B cell (primary cell): ENCODE measurements at regions of chr1 and their contacts with region 1.

Region 1: GRCh38 chr1:15820478-15820877 is 13.0 kb upstream of the UQCRHL start:
- DNase-seq: no peak
- ATAC-seq: no peak
- H3K4me3 ChIP-seq: no peak overlapping the region
- H3K4me3 Mint-ChIP-seq: no peak overlapping the region
- H3K27ac ChIP-seq: no peak overlapping the region
- H3K27ac Mint-ChIP-seq: no peak overlapping the region
- H3K4me1 ChIP-seq: peaks cover 4 to 10% of the 10 kb centered on the region in 2 donors
- H3K4me1 Mint-ChIP-seq: peaks cover 9% of the 10 kb centered on the region
- H3K27me3 ChIP-seq: no peaks in the 10 kb centered on the region
- H3K27me3 Mint-ChIP-seq: no peaks in the 10 kb centered on the region
- CTCF ChIP-seq: no peak

Region 2: GRCh38 chr1:15803354-15803753 is 17.1 kb before region 1 on chr1:
- CTCF ChIA-PET with region 1: interaction called, 20 read pairs
- POLR2A ChIA-PET with region 1: no interaction called
- intact Hi-C with region 1: no loop called
- DNase-seq: peak; percentile 68
- ATAC-seq: peak; percentile 53
- H3K4me3 ChIP-seq: no peak overlapping the region
- H3K4me3 Mint-ChIP-seq: no peak overlapping the region
- H3K27ac ChIP-seq: no peak overlapping the region
- H3K27ac Mint-ChIP-seq: no peak overlapping the region
- H3K4me1 ChIP-seq: no peaks in the 10 kb centered on the region
- H3K4me1 Mint-ChIP-seq: no peaks in the 10 kb centered on the region
- H3K27me3 ChIP-seq: peaks cover 0 to 2% (median 0%) of the 10 kb centered on the region in 4 experiments
- H3K27me3 Mint-ChIP-seq: peaks cover 7% of the 10 kb centered on the region
- CTCF ChIP-seq: peak; percentile 67

Region 3: GRCh38 chr1:15847100-15847892 is 26.8 kb after region 1 on chr1 and contains the start of gene SPEN:
- CTCF ChIA-PET with region 1: interaction called, 52 read pairs
- POLR2A ChIA-PET with region 1: interaction called, 6 read pairs
- intact Hi-C with region 1: loop called (anchors 2 kb)
- DNase-seq: peak; percentile 99
- ATAC-seq: peak; percentile 80
- H3K4me3 ChIP-seq: peak within 1 kb of the TSS; percentile 82 to 99 (median 94)
- H3K4me3 Mint-ChIP-seq: peak within 1 kb of the TSS; percentile 97
- H3K27ac ChIP-seq: peak within 1 kb of the TSS; percentile 87 to 98
- H3K27ac Mint-ChIP-seq: peak within 1 kb of the TSS; percentile 99
- H3K4me1 ChIP-seq: peaks cover 51 to 72% of the 10 kb centered on the region in 2 donors
- H3K4me1 Mint-ChIP-seq: peaks cover 53% of the 10 kb centered on the region
- H3K27me3 ChIP-seq: no peaks in the 10 kb centered on the region
- H3K27me3 Mint-ChIP-seq: no peaks in the 10 kb centered on the region
- CTCF ChIP-seq: no peak
- total RNA-seq, gene SPEN: 126 and 140 TPM in 2 replicates

Region 4: GRCh38 chr1:15902882-15903281 is 82.4 kb after region 1 on chr1:
- CTCF ChIA-PET with region 1: interaction called, 24 read pairs
- POLR2A ChIA-PET with region 1: interaction called, 6 read pairs
- intact Hi-C with region 1: no loop called
- DNase-seq: no peak
- ATAC-seq: no peak
- H3K4me3 ChIP-seq: no peak overlapping the region
- H3K4me3 Mint-ChIP-seq: no peak overlapping the region
- H3K27ac ChIP-seq: no peak overlapping the region
- H3K27ac Mint-ChIP-seq: no peak overlapping the region
- H3K4me1 ChIP-seq: no peaks in the 10 kb centered on the region
- H3K4me1 Mint-ChIP-seq: peaks cover 27% of the 10 kb centered on the region
- H3K27me3 ChIP-seq: no peaks in the 10 kb centered on the region
- H3K27me3 Mint-ChIP-seq: no peaks in the 10 kb centered on the region
- CTCF ChIP-seq: no peak

Region 5: DNA sequence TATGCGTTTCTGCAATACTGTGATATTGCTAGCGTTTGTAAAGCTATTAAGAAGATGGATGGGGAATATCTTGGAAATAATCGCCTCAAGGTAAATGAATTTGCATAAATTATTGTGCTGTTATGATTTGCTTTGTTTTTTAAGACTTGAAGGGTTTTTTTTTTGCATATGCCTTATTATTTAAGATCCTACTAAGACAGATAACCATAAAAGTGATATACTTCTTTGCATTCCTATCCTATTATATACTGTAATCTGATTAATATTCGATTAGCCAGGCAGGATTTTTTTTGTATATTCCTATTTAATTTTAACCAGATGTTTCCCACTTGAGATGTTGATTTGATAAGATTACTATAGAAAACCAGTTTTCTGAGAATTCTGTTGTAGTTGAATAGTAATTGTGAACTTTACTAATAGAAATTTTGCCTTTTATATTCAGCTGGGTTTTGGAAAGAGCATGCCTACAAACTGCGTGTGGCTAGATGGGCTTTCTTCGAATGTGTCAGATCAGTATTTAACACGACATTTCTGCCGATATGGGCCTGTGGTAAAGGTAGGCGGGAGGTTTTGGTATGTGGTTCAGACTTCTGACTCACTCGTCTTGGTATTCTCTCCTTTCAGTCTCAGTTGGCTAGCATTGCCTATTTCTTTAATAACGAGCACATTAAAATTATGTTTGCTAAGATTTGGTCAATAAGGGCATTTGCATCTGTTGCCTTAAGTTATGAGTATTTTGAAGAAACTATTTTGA is 98.7 kb after region 1 on chr1:
- CTCF ChIA-PET with region 1: interaction called, 34 read pairs
- POLR2A ChIA-PET with region 1: no interaction called
- intact Hi-C with region 1: loop called (anchors 5 kb)
- DNase-seq: no peak
- ATAC-seq: no peak
- H3K4me3 ChIP-seq: no peak overlapping the region
- H3K4me3 Mint-ChIP-seq: no peak overlapping the region
- H3K27ac ChIP-seq: peak overlapping the region in 1 of 2 donors; percentile 43
- H3K27ac Mint-ChIP-seq: peak overlapping the region; percentile 18
- H3K4me1 ChIP-seq: peaks cover 6 to 13% of the 10 kb centered on the region in 2 donors
- H3K4me1 Mint-ChIP-seq: peaks cover 26% of the 10 kb centered on the region
- H3K27me3 ChIP-seq: no peaks in the 10 kb centered on the region
- H3K27me3 Mint-ChIP-seq: no peaks in the 10 kb centered on the region
- CTCF ChIP-seq: no peak

Region 6: GRCh38 chr1:15966081-15966955 is 145.8 kb after region 1 on chr1:
- CTCF ChIA-PET with region 1: interaction called, 14 read pairs
- POLR2A ChIA-PET with region 1: interaction called, 4 read pairs
- intact Hi-C with region 1: no loop called
- DNase-seq: peak; percentile 88
- ATAC-seq: peak; percentile 79
- H3K4me3 ChIP-seq: peak overlapping the region in 4 of 5 experiments; percentile 27 to 40 (median 30)
- H3K4me3 Mint-ChIP-seq: peak overlapping the region; percentile 74
- H3K27ac ChIP-seq: peak overlapping the region; percentile 86 to 88
- H3K27ac Mint-ChIP-seq: peak overlapping the region; percentile 97
- H3K4me1 ChIP-seq: peaks cover 56 to 66% of the 10 kb centered on the region in 2 donors
- H3K4me1 Mint-ChIP-seq: peaks cover 65% of the 10 kb centered on the region
- H3K27me3 ChIP-seq: no peaks in the 10 kb centered on the region
- H3K27me3 Mint-ChIP-seq: no peaks in the 10 kb centered on the region
- CTCF ChIP-seq: no peak

Region 7: GRCh38 chr1:16055613-16056520 is 235.4 kb after region 1 on chr1:
- CTCF ChIA-PET with region 1: interaction called, 9 read pairs
- POLR2A ChIA-PET with region 1: no interaction called
- intact Hi-C with region 1: loop called (anchors 1 kb)
- DNase-seq: peak; percentile 91
- ATAC-seq: peak; percentile 100
- H3K4me3 ChIP-seq: no peak overlapping the region
- H3K4me3 Mint-ChIP-seq: no peak overlapping the region
- H3K27ac ChIP-seq: no peak overlapping the region
- H3K27ac Mint-ChIP-seq: no peak overlapping the region
- H3K4me1 ChIP-seq: peaks cover 4 to 5% of the 10 kb centered on the region in 2 donors
- H3K4me1 Mint-ChIP-seq: peaks cover 6% of the 10 kb centered on the region
- H3K27me3 ChIP-seq: peaks cover 0 to 2% (median 0%) of the 10 kb centered on the region in 4 experiments
- H3K27me3 Mint-ChIP-seq: peaks cover 9% of the 10 kb centered on the region
- CTCF ChIP-seq: peak; percentile 74